CD8-positive, alpha-beta T cell (primary cell): ENCODE measurements at regions of chr2 and their contacts with region 1.

Region 1: GRCh38 chr2:157468931-157469708 is 25.2 kb upstream of the CYTIP start:
- DNase-seq: peak in 2 of 9 experiments; percentile 70 to 85
- ATAC-seq: peak; percentile 87
- H3K4me3 ChIP-seq: peak overlapping the region in 1 of 2 experiments; percentile 2
- H3K4me3 Mint-ChIP-seq: peak overlapping the region; percentile 57
- H3K27ac ChIP-seq: peak overlapping the region; percentile 67 to 73
- H3K27ac Mint-ChIP-seq: peak overlapping the region; percentile 96
- H3K4me1 ChIP-seq: peaks cover 43% of the 10 kb centered on the region
- H3K4me1 Mint-ChIP-seq: peaks cover 67% of the 10 kb centered on the region
- H3K27me3 ChIP-seq: no peaks in the 10 kb centered on the region
- H3K27me3 Mint-ChIP-seq: no peaks in the 10 kb centered on the region
- CTCF ChIP-seq: no peak

Region 2: GRCh38 chr2:157296490-157297357 is 172.4 kb before region 1 on chr2:
- CTCF ChIA-PET with region 1: no interaction called
- POLR2A ChIA-PET with region 1: no interaction called
- intact Hi-C with region 1: no loop called
- DNase-seq: no peak
- ATAC-seq: no peak
- H3K4me3 ChIP-seq: no peak overlapping the region
- H3K4me3 Mint-ChIP-seq: no peak overlapping the region
- H3K27ac ChIP-seq: no peak overlapping the region
- H3K27ac Mint-ChIP-seq: no peak overlapping the region
- H3K4me1 ChIP-seq: no peaks in the 10 kb centered on the region
- H3K4me1 Mint-ChIP-seq: no peaks in the 10 kb centered on the region
- H3K27me3 ChIP-seq: no peaks in the 10 kb centered on the region
- H3K27me3 Mint-ChIP-seq: peaks cover 2% of the 10 kb centered on the region
- CTCF ChIP-seq: no peak

Region 3: DNA sequence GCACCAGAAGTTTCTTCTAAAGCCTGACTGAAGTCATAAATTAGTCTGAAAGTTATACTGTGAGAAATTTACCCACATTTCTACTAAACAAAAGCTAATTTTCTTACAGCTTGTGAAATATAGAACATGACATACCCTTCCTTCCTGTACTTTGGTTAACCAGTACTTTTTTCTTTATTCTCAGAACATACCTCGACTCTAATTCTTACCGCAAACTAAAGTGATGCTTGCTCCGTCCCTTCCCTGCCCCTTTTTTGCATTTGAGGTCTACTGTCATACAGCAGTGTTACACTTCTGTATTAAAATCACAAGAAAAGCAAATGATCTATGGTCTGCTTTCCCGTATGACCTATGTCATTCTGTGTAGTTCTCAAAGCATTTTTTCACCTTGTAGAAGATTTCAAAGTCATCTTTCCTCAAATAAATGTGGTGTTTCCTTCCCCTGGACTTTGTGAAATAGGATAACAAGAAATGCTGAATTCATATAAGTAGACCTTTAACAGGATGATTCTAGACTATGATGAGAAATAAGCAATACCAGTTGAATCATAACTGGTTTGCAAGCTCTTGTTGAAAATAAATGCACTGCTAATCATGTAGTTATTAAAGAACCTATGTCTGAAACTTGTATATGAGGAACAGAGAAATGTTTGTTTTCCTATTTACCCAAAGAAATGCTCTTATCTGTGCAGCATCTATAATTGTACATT is 55.6 kb before region 1 on chr2:
- CTCF ChIA-PET with region 1: no interaction called
- POLR2A ChIA-PET with region 1: interaction called, 3 read pairs
- intact Hi-C with region 1: loop called in 1 of 2 experiments (anchors 1 kb)
- DNase-seq: peak in 7 of 9 experiments; percentile 41 to 91 (median 64)
- ATAC-seq: peak; percentile 76
- H3K4me3 ChIP-seq: peak overlapping the region in 1 of 2 experiments; percentile 2
- H3K4me3 Mint-ChIP-seq: peak overlapping the region; percentile 44
- H3K27ac ChIP-seq: peak overlapping the region; percentile 49 to 80
- H3K27ac Mint-ChIP-seq: peak overlapping the region; percentile 91
- H3K4me1 ChIP-seq: peaks cover 95% of the 10 kb centered on the region
- H3K4me1 Mint-ChIP-seq: peaks cover 89% of the 10 kb centered on the region
- H3K27me3 ChIP-seq: no peaks in the 10 kb centered on the region
- H3K27me3 Mint-ChIP-seq: no peaks in the 10 kb centered on the region
- CTCF ChIP-seq: no peak